MCF 10A (cell line): ENCODE measurements at regions of chr10 and their contacts with region 1.

Region 1: GRCh38 chr10:29804025-29804852 is 169.5 kb upstream of the SVIL start:
- DNase-seq: peak; percentile 98
- H3K4me3 Mint-ChIP-seq: peak overlapping the region; percentile 12
- H3K27ac Mint-ChIP-seq: peak overlapping the region; percentile 97
- H3K4me1 Mint-ChIP-seq: peaks cover 48% of the 10 kb centered on the region
- H3K27me3 Mint-ChIP-seq: no peaks in the 10 kb centered on the region
- CTCF ChIP-seq: no peak

Region 2: GRCh38 chr10:29702273-29703164 is 101.7 kb before region 1 on chr10:
- CTCF ChIA-PET with region 1: no interaction called
- POLR2A ChIA-PET with region 1: no interaction called
- intact Hi-C with region 1: no loop called
- DNase-seq: no peak
- H3K4me3 Mint-ChIP-seq: no peak overlapping the region
- H3K27ac Mint-ChIP-seq: no peak overlapping the region
- H3K4me1 Mint-ChIP-seq: no peaks in the 10 kb centered on the region
- H3K27me3 Mint-ChIP-seq: no peaks in the 10 kb centered on the region
- CTCF ChIP-seq: no peak

Region 3: DNA sequence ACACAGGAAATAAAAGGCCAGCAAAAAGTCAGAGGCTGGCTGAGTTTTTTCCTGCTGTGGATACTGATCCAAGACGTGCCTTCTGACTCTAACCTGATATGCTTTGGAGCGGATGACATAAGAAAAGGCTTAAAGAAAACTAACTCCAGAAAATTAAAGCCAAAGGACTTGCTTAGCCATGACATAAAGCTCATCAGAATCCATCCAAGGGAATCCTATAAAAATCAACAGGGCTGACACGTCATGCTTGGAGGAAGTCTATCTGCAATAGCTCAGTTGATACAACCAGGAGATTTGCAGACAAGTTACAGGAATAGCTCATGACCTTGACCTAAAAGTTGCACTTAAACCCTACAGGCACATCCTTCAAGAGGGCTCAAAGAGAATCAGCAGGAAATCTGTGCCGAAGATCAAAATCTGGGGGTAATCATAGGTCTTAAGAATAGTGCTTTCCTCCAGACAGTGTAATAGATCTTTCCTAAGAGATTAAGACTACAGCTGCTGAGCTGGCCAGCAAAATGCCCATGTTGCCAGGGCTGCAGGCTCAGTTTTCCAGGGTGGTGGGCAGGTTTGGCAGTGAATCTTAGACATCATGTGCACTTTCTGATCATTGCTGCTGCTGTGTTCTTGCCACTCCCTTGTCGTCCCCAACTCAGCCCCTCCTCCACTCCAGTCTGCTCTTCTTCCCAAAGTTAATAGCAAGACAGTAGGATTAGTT is 58.0 kb before region 1 on chr10:
- CTCF ChIA-PET with region 1: no interaction called
- POLR2A ChIA-PET with region 1: no interaction called
- intact Hi-C with region 1: loop called (anchors 2 kb)
- DNase-seq: no peak
- H3K4me3 Mint-ChIP-seq: no peak overlapping the region
- H3K27ac Mint-ChIP-seq: no peak overlapping the region
- H3K4me1 Mint-ChIP-seq: no peaks in the 10 kb centered on the region
- H3K27me3 Mint-ChIP-seq: no peaks in the 10 kb centered on the region
- CTCF ChIP-seq: no peak

Region 4: DNA sequence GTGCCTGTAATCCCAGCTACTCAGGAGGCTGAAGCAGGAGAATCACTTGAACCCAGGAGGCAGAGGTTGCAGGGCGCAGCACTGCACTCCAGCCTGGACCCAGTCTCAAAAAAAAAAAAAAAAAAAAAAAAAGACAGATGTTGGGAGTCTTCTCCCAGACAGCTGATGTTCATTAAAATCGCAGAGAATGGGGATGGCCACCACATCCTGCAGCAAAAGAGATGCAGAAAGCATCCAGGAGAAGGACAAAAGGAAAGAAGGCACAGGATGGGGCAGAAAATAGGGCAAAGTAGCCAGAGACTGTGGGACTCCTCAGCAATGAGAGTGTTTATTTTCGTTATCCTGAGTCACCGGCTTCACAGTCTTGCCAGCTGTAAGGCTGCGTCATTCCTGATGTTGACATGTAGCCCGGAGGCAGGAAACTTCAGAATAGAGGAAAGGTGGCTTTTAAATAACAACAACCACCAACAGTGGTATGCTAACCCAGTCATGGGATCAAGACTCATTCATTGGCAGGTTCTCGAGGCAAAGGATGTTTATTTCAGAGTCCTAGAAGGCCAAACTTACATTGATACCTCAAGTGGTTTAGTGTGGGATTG is 20.0 kb before region 1 on chr10:
- CTCF ChIA-PET with region 1: interaction called, 4 read pairs
- POLR2A ChIA-PET with region 1: interaction called, 6 read pairs
- intact Hi-C with region 1: loop called (anchors 1 kb)
- DNase-seq: peak; percentile 99
- H3K4me3 Mint-ChIP-seq: peak overlapping the region; percentile 35
- H3K27ac Mint-ChIP-seq: peak overlapping the region; percentile 85
- H3K4me1 Mint-ChIP-seq: peaks cover 7% of the 10 kb centered on the region
- H3K27me3 Mint-ChIP-seq: no peaks in the 10 kb centered on the region
- CTCF ChIP-seq: no peak